HCT116 (cell line): ENCODE measurements at regions of chr2 and their contacts with region 1.

Region 1: GRCh38 chr2:39728941-39729351 is 50.1 kb downstream of the THUMPD2 start:
- DNase-seq: peak; percentile 2
- ATAC-seq: peak; percentile 84
- H3K4me3 ChIP-seq: no peak overlapping the region
- H3K27ac ChIP-seq: no peak overlapping the region
- H3K4me1 ChIP-seq: 0 out of 4 replicates have a peak, but pooled peaks cover 0 to under 1% of the 10 kb centered on the region in 2 experiments
- H3K27me3 ChIP-seq: no peaks in the 10 kb centered on the region
- CTCF ChIP-seq: peak; percentile 55 to 92 (median 89)
- POLR2A ChIP-seq: no peak
- RAD21 ChIP-seq: peak; percentile 69

Region 2: DNA sequence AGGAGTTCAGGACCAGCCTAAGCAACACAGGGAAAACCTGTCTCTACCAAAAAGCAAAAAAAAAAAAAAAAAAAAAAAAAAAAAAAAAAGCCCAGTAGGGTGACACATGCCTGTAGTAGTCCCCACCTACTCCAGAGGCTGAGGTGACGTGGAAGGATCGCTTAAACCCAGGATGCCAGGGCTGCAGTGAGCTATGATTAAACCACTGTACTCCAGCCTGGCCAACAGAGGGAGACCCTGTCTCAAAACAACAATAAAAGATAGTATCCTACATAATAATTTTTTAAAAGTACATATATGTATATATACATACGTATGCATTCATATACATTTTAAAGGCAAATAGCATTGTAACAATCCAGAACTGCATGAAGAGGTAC is 659.8 kb before region 1 on chr2:
- CTCF ChIA-PET with region 1: no interaction called
- POLR2A ChIA-PET with region 1: no interaction called
- RAD21 ChIA-PET with region 1: no interaction called
- intact Hi-C with region 1: loop called (anchors 10 kb)
- DNase-seq: no peak
- ATAC-seq: peak; percentile 68
- H3K4me3 ChIP-seq: no peak overlapping the region
- H3K27ac ChIP-seq: no peak overlapping the region
- H3K4me1 ChIP-seq: no peaks in the 10 kb centered on the region
- H3K27me3 ChIP-seq: no peaks in the 10 kb centered on the region
- CTCF ChIP-seq: no peak
- POLR2A ChIP-seq: no peak
- RAD21 ChIP-seq: no peak

Region 3: GRCh38 chr2:39234754-39235153 is 494.2 kb before region 1 on chr2:
- CTCF ChIA-PET with region 1: interaction called, 4 read pairs
- POLR2A ChIA-PET with region 1: no interaction called
- RAD21 ChIA-PET with region 1: no interaction called
- intact Hi-C with region 1: loop called (anchors 5 kb)
- DNase-seq: no peak
- ATAC-seq: no peak
- H3K4me3 ChIP-seq: no peak overlapping the region
- H3K27ac ChIP-seq: no peak overlapping the region
- H3K4me1 ChIP-seq: no peaks in the 10 kb centered on the region
- H3K27me3 ChIP-seq: no peaks in the 10 kb centered on the region
- CTCF ChIP-seq: no peak
- POLR2A ChIP-seq: no peak
- RAD21 ChIP-seq: no peak

Region 4: DNA sequence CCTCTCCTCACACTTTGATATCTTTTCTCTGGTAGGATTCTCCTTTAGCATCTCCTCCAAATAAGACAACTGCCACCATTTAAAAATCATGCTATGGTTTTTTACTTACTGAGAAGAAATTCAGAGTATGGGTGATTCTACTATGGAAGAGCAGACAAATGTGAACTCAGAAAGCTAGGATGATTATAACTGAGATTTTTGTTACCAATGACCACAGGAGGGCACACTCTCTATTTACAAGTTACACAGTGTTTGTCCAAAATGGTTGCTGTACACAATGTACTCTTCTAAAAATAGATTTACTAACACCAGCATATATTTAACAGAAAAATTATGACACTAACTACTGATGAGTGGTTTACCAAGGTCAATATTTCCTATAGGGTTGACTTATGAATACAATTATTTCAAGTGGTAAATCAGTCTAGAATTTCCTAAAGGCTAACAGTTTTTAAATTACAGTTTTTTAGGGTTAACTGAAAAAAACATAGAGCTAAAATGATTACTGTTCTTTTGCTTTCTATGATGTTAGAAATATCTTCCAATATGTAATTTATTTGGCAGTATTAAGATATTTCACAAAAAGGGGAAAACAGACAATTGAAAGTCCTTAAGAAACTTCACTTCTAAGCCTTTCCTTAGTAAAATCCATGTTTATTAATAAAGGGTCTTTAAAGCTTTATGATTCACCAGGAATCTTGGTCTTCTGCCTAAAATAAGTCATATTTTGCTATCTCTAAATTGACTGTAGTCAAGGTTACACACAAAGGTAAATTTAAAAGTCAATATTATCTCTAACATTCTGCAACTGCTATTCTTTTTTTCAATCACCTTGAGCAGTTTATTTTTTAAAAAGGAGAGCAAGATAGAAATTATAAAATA is 349.1 kb before region 1 on chr2:
- CTCF ChIA-PET with region 1: interaction called, 22 read pairs
- POLR2A ChIA-PET with region 1: no interaction called
- RAD21 ChIA-PET with region 1: no interaction called
- intact Hi-C with region 1: loop called (anchors 1 kb)
- DNase-seq: peak; percentile 12
- ATAC-seq: peak; percentile 78
- H3K4me3 ChIP-seq: no peak overlapping the region
- H3K27ac ChIP-seq: no peak overlapping the region
- H3K4me1 ChIP-seq: no peaks in the 10 kb centered on the region
- H3K27me3 ChIP-seq: no peaks in the 10 kb centered on the region
- CTCF ChIP-seq: peak; percentile 43 to 71 (median 47); a peak in 5 of 6 replicates
- POLR2A ChIP-seq: no peak
- RAD21 ChIP-seq: peak; percentile 76

Region 5: GRCh38 chr2:39513641-39514094 is 215.3 kb before region 1 on chr2:
- CTCF ChIA-PET with region 1: interaction called, 3 read pairs
- POLR2A ChIA-PET with region 1: no interaction called
- RAD21 ChIA-PET with region 1: no interaction called
- intact Hi-C with region 1: loop called (anchors 1 kb)
- DNase-seq: peak; percentile 32
- ATAC-seq: peak; percentile 95
- H3K4me3 ChIP-seq: no peak overlapping the region
- H3K27ac ChIP-seq: no peak overlapping the region
- H3K4me1 ChIP-seq: peaks cover 0 to 11% of the 10 kb centered on the region in 2 experiments; a peak in 2 of 4 replicates
- H3K27me3 ChIP-seq: no peaks in the 10 kb centered on the region
- CTCF ChIP-seq: peak; percentile 67 to 71 (median 68); a peak in 5 of 6 replicates
- POLR2A ChIP-seq: no peak
- RAD21 ChIP-seq: peak; percentile 74

Region 6: GRCh38 chr2:39772086-39772811 is 43.3 kb after region 1 on chr2:
- CTCF ChIA-PET with region 1: no interaction called
- POLR2A ChIA-PET with region 1: no interaction called
- RAD21 ChIA-PET with region 1: no interaction called
- intact Hi-C with region 1: no loop called
- DNase-seq: no peak
- ATAC-seq: no peak
- H3K4me3 ChIP-seq: no peak overlapping the region
- H3K27ac ChIP-seq: no peak overlapping the region
- H3K4me1 ChIP-seq: peaks cover 0 to 4% of the 10 kb centered on the region in 2 experiments; a peak in 1 of 4 replicates
- H3K27me3 ChIP-seq: no peaks in the 10 kb centered on the region
- CTCF ChIP-seq: no peak
- POLR2A ChIP-seq: no peak
- RAD21 ChIP-seq: no peak

Region 7: DNA sequence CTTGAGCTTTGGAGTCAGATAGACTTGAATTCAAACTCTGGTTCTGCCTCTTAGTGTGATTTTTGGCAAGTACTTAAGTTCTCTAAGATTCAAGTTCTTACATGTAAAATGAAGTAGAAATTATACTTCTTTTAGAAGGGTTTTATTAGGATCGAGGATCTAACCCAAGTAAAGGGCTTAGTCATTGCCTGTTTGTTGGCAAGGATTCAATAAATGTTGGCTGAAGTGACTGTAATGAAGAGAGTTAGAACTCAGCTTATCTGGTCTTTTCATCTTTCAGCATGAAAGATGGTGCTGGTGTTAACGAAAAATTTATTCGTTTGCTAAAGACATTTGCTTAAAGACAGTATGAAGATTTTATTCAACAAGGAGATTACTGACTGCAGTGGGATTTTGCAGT is 366.1 kb after region 1 on chr2:
- CTCF ChIA-PET with region 1: no interaction called
- POLR2A ChIA-PET with region 1: no interaction called
- RAD21 ChIA-PET with region 1: no interaction called
- intact Hi-C with region 1: no loop called
- DNase-seq: no peak
- ATAC-seq: no peak
- H3K4me3 ChIP-seq: no peak overlapping the region
- H3K27ac ChIP-seq: no peak overlapping the region
- H3K4me1 ChIP-seq: no peaks in the 10 kb centered on the region
- H3K27me3 ChIP-seq: peaks cover 9% of the 10 kb centered on the region; the same call in 1 of the 2 replicates
- CTCF ChIP-seq: no peak
- POLR2A ChIP-seq: no peak
- RAD21 ChIP-seq: no peak